ENCODE measurements at regions of chr1 and their contacts with region 1.

Region 1: DNA sequence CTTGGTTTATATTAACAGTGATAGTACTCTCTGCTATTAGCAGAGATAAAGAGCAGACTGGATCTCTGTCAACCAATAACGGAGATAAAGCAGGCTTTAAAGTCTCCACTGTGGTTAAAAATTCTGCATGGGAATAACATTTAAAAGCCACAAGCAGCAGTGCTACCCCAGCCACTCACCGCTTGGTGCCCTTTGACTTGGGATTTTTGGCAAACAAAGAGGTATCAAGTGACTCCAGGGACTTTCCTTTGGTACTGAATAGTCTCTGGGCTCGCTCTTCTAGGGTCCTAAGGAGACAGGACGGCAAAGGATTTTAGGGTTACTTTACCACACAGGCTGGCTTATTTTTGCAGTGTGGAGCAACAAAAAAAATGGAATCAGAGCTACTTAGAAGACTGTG is 11.3 kb downstream of the SF3A3 start:
- DNase-seq: no peak
- ATAC-seq: no peak
- H3K4me3 ChIP-seq: no peak overlapping the region
- H3K27ac ChIP-seq: no peak overlapping the region
- H3K4me1 ChIP-seq: no peaks in the 10 kb centered on the region
- H3K27me3 ChIP-seq: no peaks in the 10 kb centered on the region
- CTCF ChIP-seq: no peak

Region 2: DNA sequence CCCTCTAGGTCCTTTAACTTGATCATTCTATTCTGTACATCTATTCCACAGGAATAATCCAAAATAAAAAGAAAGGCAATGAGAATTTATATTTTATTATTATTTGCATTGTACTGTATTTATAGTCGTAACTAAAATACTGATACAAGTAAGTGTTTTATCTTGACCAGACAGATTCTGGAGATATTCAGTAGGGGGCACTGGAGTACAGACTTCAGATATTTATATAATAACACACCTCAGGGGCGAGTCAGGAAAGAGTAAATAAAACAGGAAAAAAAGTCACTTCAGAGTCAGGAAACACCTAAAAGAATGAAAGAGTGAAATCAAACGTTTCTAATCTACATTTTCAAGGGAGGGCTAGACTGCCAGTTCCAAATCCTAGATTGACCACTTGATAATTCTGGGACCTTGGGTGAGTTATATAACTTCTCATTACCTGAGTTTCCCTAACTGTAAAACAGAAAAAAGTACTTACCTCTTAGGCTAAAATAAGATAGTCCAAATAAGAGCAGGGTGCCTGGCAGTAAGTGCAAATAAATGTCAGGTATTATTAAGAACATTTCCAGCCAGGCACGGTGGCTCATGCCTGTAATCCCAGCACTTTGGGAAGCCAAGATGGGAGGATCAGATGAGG is 88.0 kb before region 1 on chr1:
- CTCF ChIA-PET with region 1: interaction called, 3 read pairs
- POLR2A ChIA-PET with region 1: no interaction called
- intact Hi-C with region 1: loop called (anchors 1 kb)
- DNase-seq: peak; percentile 72
- ATAC-seq: peak; percentile 86
- H3K4me3 ChIP-seq: no peak overlapping the region
- H3K27ac ChIP-seq: no peak overlapping the region
- H3K4me1 ChIP-seq: no peaks in the 10 kb centered on the region; the same call in 1 of the 2 replicates
- H3K27me3 ChIP-seq: no peaks in the 10 kb centered on the region
- CTCF ChIP-seq: peak; percentile 76